Dorsolateral prefrontal cortex (tissue), 120 donors: ENCODE measurements at regions of chr9 and their contacts with region 1.

Region 1: GRCh38 chr9:114499528-114499927 is 5.7 kb downstream of the WHRN start:
- DNase-seq: peak in 3 of 10 donors; percentile 31 to 53 (median 43)
- H3K4me3 ChIP-seq: peak overlapping the region in 51 of 59 donors; percentile 9 to 87 (median 36)
- H3K27ac ChIP-seq: peak overlapping the region in 58 of 59 donors; percentile 73 to 98 (median 92)
- H3K27me3 ChIP-seq: peaks cover 0 to 8% (median 0%) of the 10 kb centered on the region in 45 donors
- CTCF ChIP-seq: peak in 4 of 56 donors; percentile 8 to 20 (median 16)

Region 2: DNA sequence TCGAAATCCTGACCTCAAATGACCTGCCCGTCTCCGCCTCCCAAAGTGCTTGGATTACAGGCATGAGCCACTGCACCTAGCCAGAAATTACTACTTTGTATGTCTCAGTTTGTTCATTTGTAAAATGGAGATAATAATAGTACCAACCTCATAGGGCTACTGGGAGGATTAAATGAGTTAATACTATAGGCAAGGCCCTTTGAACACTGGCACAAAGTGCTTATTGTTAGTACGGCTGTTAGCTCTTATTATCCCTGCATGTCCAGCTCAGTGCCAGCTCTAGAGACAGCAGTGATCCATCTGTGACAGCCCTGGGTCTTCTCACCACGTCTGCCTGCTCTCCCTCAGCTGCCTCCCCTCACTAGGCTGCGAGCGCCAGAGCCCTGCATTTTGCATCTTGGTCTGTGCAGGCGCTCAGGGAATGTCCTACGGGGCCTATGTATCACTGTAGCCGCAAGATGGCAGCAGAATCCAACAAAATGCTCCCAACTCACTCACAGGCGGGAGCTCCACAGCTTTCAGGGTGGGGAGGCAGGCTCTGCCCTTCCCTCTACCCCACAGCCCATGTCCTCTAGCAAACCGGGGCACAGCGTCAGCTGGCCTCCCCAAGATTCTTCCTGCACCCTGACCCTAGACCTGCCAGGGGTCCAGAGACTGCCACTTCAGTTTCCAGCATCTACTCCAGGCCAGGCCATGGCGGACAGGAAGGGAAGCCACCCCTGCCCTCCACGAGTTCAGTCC is 94.1 kb before region 1 on chr9:
- intact Hi-C with region 1: no loop called
- DNase-seq: peak; percentile 50 to 89 (median 82)
- H3K4me3 ChIP-seq: no peak overlapping the region
- H3K27ac ChIP-seq: peak overlapping the region in 55 of 59 donors; percentile 7 to 87 (median 67)
- H3K27me3 ChIP-seq: no peaks in the 10 kb centered on the region
- CTCF ChIP-seq: peak; percentile 52 to 93 (median 82)

Region 3: DNA sequence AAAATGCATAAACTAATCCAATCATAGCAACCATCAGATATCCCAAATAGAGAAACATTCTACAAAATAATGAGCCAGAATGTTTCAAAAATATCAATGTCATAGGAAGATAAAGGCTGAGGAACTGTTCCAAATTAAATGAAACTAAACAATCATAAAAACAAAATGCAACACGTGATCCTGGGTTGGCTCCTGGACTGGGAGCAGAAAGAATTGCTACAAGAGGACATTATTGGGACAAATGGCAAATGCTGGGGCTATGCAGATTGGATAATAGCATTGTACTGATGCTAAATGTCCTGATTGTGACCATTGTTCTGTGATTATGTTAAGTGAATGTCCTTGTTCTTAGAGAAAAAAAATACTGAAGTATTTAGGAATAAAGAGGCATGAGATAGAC is 57.5 kb before region 1 on chr9:
- intact Hi-C with region 1: loop called (anchors 1 to 5 kb)
- DNase-seq: peak in 1 of 10 donors; percentile 19
- H3K4me3 ChIP-seq: peak overlapping the region in 28 of 59 donors; percentile 1 to 36 (median 21)
- H3K27ac ChIP-seq: peak overlapping the region; percentile 24 to 98 (median 92)
- H3K27me3 ChIP-seq: no peaks in the 10 kb centered on the region
- CTCF ChIP-seq: no peak

Region 4: GRCh38 chr9:114448706-114449105 is 50.8 kb before region 1 on chr9:
- intact Hi-C with region 1: loop called in 1 of 2 experiments (anchors 5 kb)
- DNase-seq: peak in 1 of 10 donors; percentile 5
- H3K4me3 ChIP-seq: no peak overlapping the region
- H3K27ac ChIP-seq: peak overlapping the region in 28 of 59 donors; percentile 1 to 98 (median 54)
- H3K27me3 ChIP-seq: no peaks in the 10 kb centered on the region
- CTCF ChIP-seq: no peak

Region 5: GRCh38 chr9:114738581-114739316 is 239.2 kb after region 1 on chr9:
- intact Hi-C with region 1: no loop called
- DNase-seq: peak in 7 of 10 donors; percentile 18 to 72 (median 55)
- H3K4me3 ChIP-seq: no peak overlapping the region
- H3K27ac ChIP-seq: no peak overlapping the region
- H3K27me3 ChIP-seq: peaks cover 0 to 3% (median 0%) of the 10 kb centered on the region in 45 donors
- CTCF ChIP-seq: peak; percentile 64 to 93 (median 82)

Region 6: GRCh38 chr9:114790521-114790920 is 291.0 kb after region 1 on chr9:
- intact Hi-C with region 1: no loop called
- DNase-seq: no peak
- H3K4me3 ChIP-seq: no peak overlapping the region
- H3K27ac ChIP-seq: no peak overlapping the region
- H3K27me3 ChIP-seq: no peaks in the 10 kb centered on the region
- CTCF ChIP-seq: no peak

Region 7: DNA sequence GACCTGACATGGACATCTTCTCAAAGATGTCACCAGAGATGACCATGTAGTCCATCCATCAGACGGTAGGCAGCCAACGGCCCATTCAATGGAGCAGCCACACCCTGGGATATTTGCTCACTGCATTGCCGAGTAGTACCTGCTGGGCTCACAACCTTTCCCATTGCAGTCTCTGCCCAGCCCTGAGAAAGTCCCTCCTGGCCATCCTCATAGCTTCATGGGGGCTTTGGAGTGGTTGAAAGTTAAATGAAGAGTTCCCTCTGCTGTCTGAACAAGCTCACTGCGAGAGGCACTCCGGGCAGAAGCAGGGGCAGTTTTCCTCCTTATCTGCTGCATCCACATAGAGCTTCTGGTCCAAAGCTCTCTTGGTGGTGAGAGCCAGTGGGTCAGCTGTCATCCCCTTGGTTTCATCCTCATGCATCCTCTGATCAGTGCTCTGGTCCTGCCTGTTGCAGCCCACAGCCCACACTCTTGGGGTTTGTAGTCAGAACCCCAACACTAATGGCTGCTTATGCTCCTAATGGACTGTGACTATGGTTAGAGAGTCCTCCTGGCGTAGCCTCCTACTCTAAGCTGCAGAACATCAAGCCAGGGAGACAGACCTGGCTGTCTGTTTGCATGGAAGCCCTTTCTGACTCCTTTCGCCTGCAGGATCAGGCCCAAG is 407.5 kb after region 1 on chr9:
- intact Hi-C with region 1: no loop called
- DNase-seq: peak in 1 of 10 donors; percentile 44
- H3K4me3 ChIP-seq: no peak overlapping the region
- H3K27ac ChIP-seq: no peak overlapping the region
- H3K27me3 ChIP-seq: peaks cover 0 to 4% (median 0%) of the 10 kb centered on the region in 45 donors
- CTCF ChIP-seq: peak in 51 of 56 donors; percentile 21 to 70 (median 49)